Right lobe of liver (tissue), 6 donors: ENCODE measurements at regions of chr14 and their contacts with region 1.

Region 1: GRCh38 chr14:59055439-59056045 is 132.9 kb upstream of the DAAM1 start:
- DNase-seq: no peak
- ATAC-seq: peak; percentile 79 to 89 (median 84)
- H3K4me3 ChIP-seq: no peak overlapping the region
- H3K27ac ChIP-seq: no peak overlapping the region
- H3K4me1 ChIP-seq: no peaks in the 10 kb centered on the region
- H3K27me3 ChIP-seq: no peaks in the 10 kb centered on the region
- CTCF ChIP-seq: peak; percentile 74 to 85 (median 82)
- POLR2A ChIP-seq: no peak

Region 2: GRCh38 chr14:58501214-58501816 is 554.2 kb before region 1 on chr14:
- intact Hi-C with region 1: loop called in 1 of 2 experiments (anchors 10 kb)
- DNase-seq: no peak
- ATAC-seq: peak; percentile 76 to 85 (median 82)
- H3K4me3 ChIP-seq: no peak overlapping the region
- H3K27ac ChIP-seq: no peak overlapping the region
- H3K4me1 ChIP-seq: no peaks in the 10 kb centered on the region
- H3K27me3 ChIP-seq: no peaks in the 10 kb centered on the region
- CTCF ChIP-seq: peak; percentile 80 to 86 (median 82)
- POLR2A ChIP-seq: no peak

Region 3: GRCh38 chr14:58961045-58961731 is 94.4 kb before region 1 on chr14:
- intact Hi-C with region 1: no loop called
- DNase-seq: no peak
- ATAC-seq: no peak
- H3K4me3 ChIP-seq: no peak overlapping the region
- H3K27ac ChIP-seq: no peak overlapping the region
- H3K4me1 ChIP-seq: no peaks in the 10 kb centered on the region
- H3K27me3 ChIP-seq: no peaks in the 10 kb centered on the region
- CTCF ChIP-seq: no peak
- POLR2A ChIP-seq: no peak